Gastrocnemius medialis (tissue), 4 donors: ENCODE measurements at regions of chr2 and their contacts with region 1.

Region 1: GRCh38 chr2:41840702-41841551 is 206.9 kb upstream of the PKDCC start:
- DNase-seq: peak; percentile 94 to 97
- ATAC-seq: peak; percentile 99 to 100
- H3K4me3 ChIP-seq: peak overlapping the region; percentile 63 to 87 (median 79)
- H3K27ac ChIP-seq: peak overlapping the region; percentile 84 to 93 (median 92)
- H3K4me1 ChIP-seq: peaks cover 9 to 16% of the 10 kb centered on the region in 2 donors
- H3K27me3 ChIP-seq: no peaks in the 10 kb centered on the region
- CTCF ChIP-seq: peak; percentile 98 to 99 (median 98)
- POLR2A ChIP-seq: peak; percentile 40 to 91

Region 2: GRCh38 chr2:42086500-42086953 is 245.6 kb after region 1 on chr2:
- in situ Hi-C with region 1: no loop called
- intact Hi-C with region 1: loop called (anchors 1 kb)
- DNase-seq: peak in 1 of 2 donors; percentile 47
- ATAC-seq: peak; percentile 66
- H3K4me3 ChIP-seq: no peak overlapping the region
- H3K27ac ChIP-seq: no peak overlapping the region
- H3K4me1 ChIP-seq: peaks cover 5 to 8% of the 10 kb centered on the region in 2 donors
- H3K27me3 ChIP-seq: no peaks in the 10 kb centered on the region
- CTCF ChIP-seq: peak; percentile 72 to 89 (median 82)
- POLR2A ChIP-seq: no peak

Region 3: DNA sequence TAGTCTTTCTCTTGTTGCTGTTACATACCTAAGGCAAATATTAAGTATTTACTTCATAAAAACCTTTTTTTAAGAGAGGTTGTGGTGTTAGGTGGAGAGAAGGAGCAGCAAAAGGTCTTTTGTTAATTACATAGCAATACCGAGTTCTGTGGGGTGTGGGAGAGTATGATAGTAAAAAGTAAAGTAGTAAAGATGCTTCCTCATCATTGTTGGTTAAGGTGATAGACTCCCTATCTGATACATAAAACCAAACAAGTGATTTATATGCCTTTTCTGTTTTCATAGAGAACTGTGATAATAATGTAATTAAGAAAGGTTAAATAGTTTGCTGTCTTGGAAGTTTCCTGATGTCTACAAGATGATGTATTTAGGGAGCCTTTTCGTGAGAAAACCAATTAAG is 403.6 kb after region 1 on chr2:
- in situ Hi-C with region 1: no loop called
- intact Hi-C with region 1: loop called (anchors 5 kb)
- DNase-seq: no peak
- ATAC-seq: no peak
- H3K4me3 ChIP-seq: no peak overlapping the region
- H3K27ac ChIP-seq: no peak overlapping the region
- H3K4me1 ChIP-seq: peaks cover 4 to 9% of the 10 kb centered on the region in 2 donors
- H3K27me3 ChIP-seq: no peaks in the 10 kb centered on the region
- CTCF ChIP-seq: no peak
- POLR2A ChIP-seq: no peak

Region 4: DNA sequence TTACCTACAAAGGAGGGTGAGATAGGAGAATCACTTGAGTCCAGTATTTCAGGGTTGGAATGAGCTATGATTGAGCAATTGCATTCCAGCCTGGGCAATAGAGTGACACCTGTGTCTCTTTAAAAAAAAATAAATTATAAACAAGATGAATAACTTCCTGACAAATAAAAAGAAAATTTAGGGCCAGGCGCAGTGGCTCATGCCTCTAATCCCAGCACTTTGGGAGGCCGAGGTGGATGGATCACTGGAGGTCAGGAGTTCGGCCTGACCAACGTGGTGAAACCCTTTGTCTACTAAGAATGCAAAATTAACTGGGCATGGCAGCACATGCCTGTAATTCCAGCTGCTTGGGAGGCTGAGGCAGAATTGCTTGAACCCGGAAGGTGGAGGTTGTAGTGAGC is 744.9 kb after region 1 on chr2:
- in situ Hi-C with region 1: no loop called
- intact Hi-C with region 1: no loop called
- DNase-seq: no peak
- ATAC-seq: no peak
- H3K4me3 ChIP-seq: no peak overlapping the region
- H3K27ac ChIP-seq: no peak overlapping the region
- H3K4me1 ChIP-seq: no peaks in the 10 kb centered on the region
- H3K27me3 ChIP-seq: no peaks in the 10 kb centered on the region
- CTCF ChIP-seq: no peak
- POLR2A ChIP-seq: no peak

Region 5: GRCh38 chr2:42886921-42887320 is 1046.0 kb after region 1 on chr2:
- in situ Hi-C with region 1: no loop called
- intact Hi-C with region 1: no loop called
- DNase-seq: no peak
- ATAC-seq: no peak
- H3K4me3 ChIP-seq: no peak overlapping the region
- H3K27ac ChIP-seq: no peak overlapping the region
- H3K4me1 ChIP-seq: no peaks in the 10 kb centered on the region
- H3K27me3 ChIP-seq: no peaks in the 10 kb centered on the region
- CTCF ChIP-seq: no peak
- POLR2A ChIP-seq: no peak